ENCODE measurements at regions of chr19 and their contacts with region 1.

Region 1: DNA sequence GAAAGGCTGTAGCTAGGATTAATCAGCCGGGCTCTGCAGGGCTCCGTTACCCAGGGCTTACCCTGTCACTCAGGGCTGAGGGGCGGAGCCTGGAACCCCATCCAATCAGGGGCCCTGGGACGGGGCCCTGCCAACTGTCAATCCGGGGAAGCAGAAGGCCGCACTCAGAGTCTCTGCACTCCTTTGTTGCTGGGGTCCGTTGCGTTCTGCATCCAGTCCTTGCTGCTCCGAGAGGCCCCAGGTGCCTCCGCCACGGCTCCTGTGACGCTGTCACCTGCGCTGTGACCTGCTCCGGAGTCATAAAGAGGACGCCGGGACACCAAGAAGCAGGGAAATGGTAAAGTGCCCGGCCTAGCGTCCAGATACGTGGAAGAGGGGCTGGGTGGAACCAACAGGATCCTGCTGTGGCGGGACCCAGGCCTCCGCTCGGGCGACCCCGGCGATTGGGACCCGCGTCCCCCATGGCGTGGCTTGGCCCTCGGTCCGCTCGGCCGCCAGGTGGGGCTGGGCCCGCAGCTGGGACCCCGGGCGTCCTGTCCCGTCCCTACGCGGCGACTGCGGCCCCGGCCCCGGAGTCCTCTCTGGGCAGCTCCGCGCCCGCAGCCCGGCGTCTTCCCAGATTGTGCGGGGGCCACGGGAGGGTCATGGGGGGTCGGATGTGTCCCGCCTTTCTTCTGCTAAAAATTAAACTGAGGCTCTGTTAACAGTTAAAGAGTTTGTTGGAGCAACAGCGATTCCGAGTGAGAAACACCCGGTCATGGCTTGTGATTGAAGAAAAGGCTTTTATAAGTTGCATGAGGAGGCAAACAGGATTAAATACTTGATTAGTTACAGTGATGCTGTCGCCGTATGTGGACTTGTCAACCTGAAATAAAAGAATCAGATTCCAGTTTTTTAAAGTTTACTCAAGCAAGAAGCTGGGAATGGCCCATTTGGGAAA is at the start of gene ZNF491:
- DNase-seq: peak; percentile 95
- H3K4me3 ChIP-seq: peak within 1 kb of the TSS; percentile 59 to 74 (median 69)
- H3K27ac ChIP-seq: peak within 1 kb of the TSS; percentile 82 to 88 (median 86)
- H3K4me1 ChIP-seq: peaks cover 0 to 20% (median 13%) of the 10 kb centered on the region in 4 donors
- H3K27me3 ChIP-seq: no peaks in the 10 kb centered on the region
- CTCF ChIP-seq: peak in 1 of 4 experiments; percentile 26
- EP300 ChIP-seq: no peak
- POLR2A ChIP-seq: peak; percentile 46 to 65
- total RNA-seq, gene ZNF491: 3.6 to 6.1 (median 5.1) TPM

Region 2: DNA sequence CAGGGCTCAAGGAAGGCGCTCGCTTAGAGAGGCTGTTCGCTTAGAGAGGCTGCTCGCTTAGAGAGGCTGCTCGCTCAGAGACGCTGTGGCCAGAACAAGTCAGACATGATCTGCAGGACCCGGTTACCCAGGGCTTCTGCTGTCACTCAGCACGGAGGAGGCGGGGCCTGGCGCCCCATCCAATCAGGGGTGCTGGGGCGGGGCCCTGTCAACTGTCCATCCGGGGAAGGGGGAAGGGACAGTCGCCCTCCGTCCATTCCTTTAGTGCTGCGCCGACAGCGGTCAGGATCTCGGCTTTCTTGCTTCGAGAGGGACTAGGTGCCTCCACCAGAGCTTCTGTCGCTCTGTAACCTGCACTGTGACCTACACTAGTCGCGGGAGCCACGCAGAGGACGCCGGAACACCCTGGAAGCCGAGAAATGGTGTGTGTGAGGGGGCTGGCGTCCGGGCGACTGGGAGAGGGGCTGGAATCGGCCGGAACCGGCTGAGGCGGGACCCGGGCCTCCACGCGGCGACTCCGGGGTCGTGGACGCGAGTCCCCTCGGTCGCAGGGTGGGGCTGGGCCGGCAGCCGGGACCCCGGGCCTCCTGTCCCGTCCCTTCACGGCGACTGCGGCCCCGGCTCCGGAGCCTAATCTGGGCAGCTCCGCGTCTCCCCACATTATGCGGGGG is 15.5 kb after region 1 on chr19 and contains the start of gene ZNF440:
- intact Hi-C with region 1: loop called (anchors 1 kb)
- DNase-seq: peak; percentile 97
- H3K4me3 ChIP-seq: peak within 1 kb of the TSS; percentile 63 to 95 (median 89)
- H3K27ac ChIP-seq: peak within 1 kb of the TSS; percentile 86 to 96 (median 94)
- H3K4me1 ChIP-seq: peaks cover 0 to 20% (median 16%) of the 10 kb centered on the region in 4 donors
- H3K27me3 ChIP-seq: no peaks in the 10 kb centered on the region
- CTCF ChIP-seq: no peak
- EP300 ChIP-seq: no peak
- POLR2A ChIP-seq: peak; percentile 84 to 95
- total RNA-seq, gene ZNF440: 5.6 to 15.0 (median 9.6) TPM

Region 3: GRCh38 chr19:11881151-11881800 is 82.6 kb after region 1 on chr19:
- intact Hi-C with region 1: loop called (anchors 5 kb)
- DNase-seq: no peak
- H3K4me3 ChIP-seq: no peak overlapping the region
- H3K27ac ChIP-seq: no peak overlapping the region
- H3K4me1 ChIP-seq: peaks cover 0 to 6% (median 3%) of the 10 kb centered on the region in 4 donors
- H3K27me3 ChIP-seq: no peaks in the 10 kb centered on the region
- CTCF ChIP-seq: peak; percentile 30 to 79 (median 71)
- EP300 ChIP-seq: no peak
- POLR2A ChIP-seq: no peak

Region 4: GRCh38 chr19:11924886-11925650 is 126.4 kb after region 1 on chr19 and contains the start of gene ZNF700:
- intact Hi-C with region 1: loop called (anchors 2 kb)
- DNase-seq: peak; percentile 97
- H3K4me3 ChIP-seq: peak within 1 kb of the TSS; percentile 64 to 96 (median 81)
- H3K27ac ChIP-seq: peak within 1 kb of the TSS; percentile 84 to 97 (median 94)
- H3K4me1 ChIP-seq: peaks cover 0 to 27% (median 20%) of the 10 kb centered on the region in 4 donors
- H3K27me3 ChIP-seq: no peaks in the 10 kb centered on the region
- CTCF ChIP-seq: no peak
- EP300 ChIP-seq: no peak
- POLR2A ChIP-seq: peak; percentile 36 to 87
- total RNA-seq, gene ZNF700: 13.7 to 19.7 (median 15.0) TPM

Region 5: DNA sequence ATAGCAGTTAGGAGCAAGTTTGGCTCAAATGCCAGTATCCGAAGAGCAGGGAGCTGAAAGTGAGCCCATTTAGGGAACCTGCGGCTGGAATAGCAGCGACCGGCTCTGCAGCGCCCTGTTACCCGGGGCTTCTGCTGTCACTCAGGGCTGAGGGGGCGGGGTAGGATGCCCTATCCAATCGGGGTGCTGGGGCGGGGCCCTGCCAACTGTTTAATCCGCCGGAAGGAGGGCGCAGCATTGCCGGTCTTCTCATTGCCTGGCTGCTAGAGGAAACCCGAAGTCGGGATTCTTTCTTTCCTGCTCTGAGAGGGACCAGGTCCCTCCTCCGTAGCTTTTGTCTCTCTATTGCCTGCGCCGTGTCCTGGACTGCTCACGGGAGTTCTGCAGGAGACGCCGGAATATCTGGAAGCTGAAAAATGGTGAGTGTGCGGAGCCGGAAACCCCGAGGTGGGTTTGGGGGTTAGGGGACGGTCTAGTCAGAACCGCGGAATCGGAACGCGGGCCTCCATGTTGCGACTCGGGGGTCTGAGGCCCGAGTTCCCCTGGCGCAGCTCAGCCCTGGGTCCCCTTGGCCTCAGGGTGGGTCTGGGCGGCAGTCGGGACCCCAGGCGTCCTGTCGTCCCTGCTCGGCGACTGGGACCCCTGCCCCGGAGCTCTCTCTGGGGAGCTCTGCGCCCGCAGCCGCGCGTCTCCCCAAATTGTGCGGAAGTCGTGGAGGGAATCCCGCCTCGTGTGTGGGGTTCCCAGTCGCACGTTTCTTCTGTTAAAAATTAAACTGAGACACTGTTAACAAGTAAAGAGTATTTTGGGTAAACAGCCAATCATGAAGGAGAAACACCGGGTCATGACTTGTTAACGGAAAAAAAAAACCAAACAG is 189.0 kb after region 1 on chr19:
- intact Hi-C with region 1: loop called (anchors 2 kb)
- DNase-seq: peak; percentile 98
- H3K4me3 ChIP-seq: peak overlapping the region; percentile 66 to 85 (median 76)
- H3K27ac ChIP-seq: peak overlapping the region; percentile 92 to 95 (median 94)
- H3K4me1 ChIP-seq: peaks cover 0 to 15% (median 3%) of the 10 kb centered on the region in 4 donors
- H3K27me3 ChIP-seq: no peaks in the 10 kb centered on the region
- CTCF ChIP-seq: no peak
- EP300 ChIP-seq: no peak
- POLR2A ChIP-seq: peak; percentile 91 to 94

Region 6: DNA sequence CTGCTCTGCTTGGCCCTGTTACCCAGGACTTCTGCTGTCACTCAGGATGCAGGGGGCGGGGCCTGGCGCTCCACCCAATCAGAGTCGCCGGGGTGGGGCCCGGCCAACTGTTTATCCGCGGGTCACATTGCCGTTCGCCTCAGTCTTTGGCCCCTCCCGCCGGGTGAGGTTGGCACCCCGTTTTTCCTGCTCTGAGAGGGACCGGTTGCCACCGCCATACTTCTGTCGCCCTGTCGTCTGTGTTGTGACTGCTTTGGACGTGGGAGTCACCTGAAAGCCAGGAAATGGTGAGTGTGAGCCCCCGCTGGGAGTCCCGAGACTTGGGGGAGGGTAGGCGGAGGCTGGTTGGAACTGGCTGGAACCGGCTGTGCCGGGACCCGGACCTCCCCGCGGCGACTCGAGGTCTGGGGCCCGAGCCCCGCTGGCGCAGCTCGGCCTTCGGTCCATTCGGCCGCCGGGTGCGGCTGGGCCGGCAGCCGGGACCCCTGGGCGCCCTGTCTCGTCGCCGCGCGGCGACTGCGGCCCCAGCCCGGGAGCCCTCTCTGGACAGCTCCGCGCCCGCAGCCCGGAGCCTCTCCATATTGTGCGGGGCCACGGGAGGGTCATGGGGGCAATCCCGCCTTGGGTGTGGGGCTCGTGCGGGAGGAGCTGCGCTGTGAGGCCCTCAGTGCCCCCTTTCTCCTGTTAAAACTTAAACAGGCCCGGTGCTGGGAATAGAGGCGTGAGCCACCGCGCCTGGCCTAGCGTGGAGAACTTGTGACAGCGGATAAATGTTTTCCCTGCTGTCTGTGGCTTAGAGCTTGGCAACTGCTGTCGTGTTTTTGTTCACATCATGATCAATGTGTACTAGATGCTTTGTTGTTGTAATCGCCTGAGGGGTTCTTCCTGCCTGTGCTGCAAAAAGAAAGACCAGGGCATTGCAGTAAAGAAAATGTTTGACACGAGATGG is 266.2 kb after region 1 on chr19 and contains the start of gene ZNF844:
- intact Hi-C with region 1: loop called (anchors 5 kb)
- DNase-seq: peak; percentile 98
- H3K4me3 ChIP-seq: peak within 1 kb of the TSS; percentile 66 to 81 (median 77)
- H3K27ac ChIP-seq: peak within 1 kb of the TSS; percentile 91 to 95 (median 92)
- H3K4me1 ChIP-seq: peaks cover 0 to 20% (median 14%) of the 10 kb centered on the region in 4 donors
- H3K27me3 ChIP-seq: no peaks in the 10 kb centered on the region
- CTCF ChIP-seq: no peak
- EP300 ChIP-seq: peak in 1 of 4 donors; percentile 72
- POLR2A ChIP-seq: peak; percentile 93 to 96
- total RNA-seq, gene ZNF844: 6.8 to 13.2 (median 11.8) TPM

Region 7: DNA sequence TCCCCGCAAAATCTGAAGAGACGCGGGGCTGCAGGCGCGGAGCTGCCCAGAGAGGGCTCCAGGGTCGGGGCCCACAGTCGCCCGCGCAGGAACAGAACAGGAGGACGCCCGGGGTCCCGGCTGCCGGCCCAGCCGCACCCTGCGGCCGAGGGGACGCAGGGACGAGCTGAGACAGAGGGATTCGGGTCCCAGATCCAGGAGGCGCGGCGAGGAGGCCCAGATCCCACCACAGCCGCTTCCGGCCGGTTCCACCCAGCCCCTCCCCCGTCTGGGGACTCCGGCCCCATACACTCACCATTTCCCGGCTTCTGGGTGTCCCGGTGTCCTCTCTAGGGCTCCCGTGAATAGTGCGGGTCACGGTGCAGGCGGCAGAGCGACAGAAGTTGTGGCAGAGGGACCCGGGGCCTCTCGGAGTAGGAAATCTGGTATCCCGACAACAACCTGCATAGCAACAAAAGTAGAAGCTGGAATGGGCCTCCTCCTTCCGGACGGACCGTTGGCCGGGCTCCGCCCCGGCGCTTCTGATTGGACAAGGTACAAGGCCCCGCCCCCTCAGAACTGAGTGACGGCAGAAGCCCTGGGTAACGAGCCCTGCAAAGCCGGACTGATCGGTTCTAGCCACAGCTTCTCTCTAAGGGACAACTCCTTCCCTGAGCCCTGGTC is 341.4 kb after region 1 on chr19 and contains the start of gene ZNF20:
- intact Hi-C with region 1: loop called (anchors 1 kb)
- DNase-seq: peak; percentile 97
- H3K4me3 ChIP-seq: peak within 1 kb of the TSS; percentile 74 to 90 (median 81)
- H3K27ac ChIP-seq: peak within 1 kb of the TSS; percentile 82 to 90 (median 88)
- H3K4me1 ChIP-seq: peaks cover 0 to 24% (median 18%) of the 10 kb centered on the region in 4 donors
- H3K27me3 ChIP-seq: no peaks in the 10 kb centered on the region
- CTCF ChIP-seq: no peak
- EP300 ChIP-seq: no peak
- POLR2A ChIP-seq: peak in 1 of 2 donors; percentile 55
- total RNA-seq, gene ZNF20: 2.2 to 8.0 (median 2.6) TPM

Measured in sigmoid colon (tissue), 7 donors.